WTC11 (cell line): ENCODE measurements at regions of chr12 and their contacts with region 1.

Region 1: GRCh38 chr12:1117970-1118563 is 127.0 kb downstream of the ERC1 start:
- DNase-seq: peak; percentile 66
- ATAC-seq: peak; percentile 32; the same call in 1 of the 2 replicates
- H3K4me3 Mint-ChIP-seq: no peak overlapping the region
- H3K27ac Mint-ChIP-seq: no peak overlapping the region
- H3K4me1 Mint-ChIP-seq: no peaks in the 10 kb centered on the region
- H3K27me3 Mint-ChIP-seq: peaks cover 40% of the 10 kb centered on the region
- CTCF ChIP-seq: peak; percentile 91

Region 2: GRCh38 chr12:1104088-1104800 is 13.8 kb before region 1 on chr12:
- CTCF ChIA-PET with region 1: interaction called, 18 read pairs
- POLR2A ChIA-PET with region 1: no interaction called
- DNase-seq: no peak
- ATAC-seq: no peak
- H3K4me3 Mint-ChIP-seq: no peak overlapping the region
- H3K27ac Mint-ChIP-seq: no peak overlapping the region
- H3K4me1 Mint-ChIP-seq: peaks cover 31% of the 10 kb centered on the region
- H3K27me3 Mint-ChIP-seq: no peaks in the 10 kb centered on the region
- CTCF ChIP-seq: no peak

Region 3: GRCh38 chr12:1220127-1221092 is 102.3 kb after region 1 on chr12:
- CTCF ChIA-PET with region 1: interaction called, 13 read pairs
- POLR2A ChIA-PET with region 1: no interaction called
- DNase-seq: no peak
- ATAC-seq: no peak
- H3K4me3 Mint-ChIP-seq: no peak overlapping the region
- H3K27ac Mint-ChIP-seq: no peak overlapping the region
- H3K4me1 Mint-ChIP-seq: no peaks in the 10 kb centered on the region
- H3K27me3 Mint-ChIP-seq: no peaks in the 10 kb centered on the region
- CTCF ChIP-seq: no peak

Region 4: DNA sequence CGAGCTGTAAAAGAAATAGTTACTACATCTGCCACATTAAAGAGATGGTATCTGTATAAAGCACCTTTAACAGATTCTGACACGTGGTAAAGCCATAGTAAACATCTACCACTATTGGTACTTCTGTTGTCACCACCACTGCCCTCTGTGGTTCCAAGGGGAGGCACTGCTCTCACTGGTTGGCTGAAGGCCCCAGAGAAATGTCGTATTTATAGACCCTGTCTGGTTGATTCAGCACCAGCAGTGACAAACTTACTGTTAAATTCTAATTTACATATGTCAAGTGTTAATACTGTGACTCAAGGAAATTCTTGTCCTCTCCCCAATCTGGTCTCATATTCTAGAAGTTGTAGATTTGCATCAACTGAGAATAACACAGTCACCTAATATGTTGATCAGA is 154.1 kb after region 1 on chr12:
- CTCF ChIA-PET with region 1: no interaction called
- POLR2A ChIA-PET with region 1: no interaction called
- DNase-seq: no peak
- ATAC-seq: no peak
- H3K4me3 Mint-ChIP-seq: no peak overlapping the region
- H3K27ac Mint-ChIP-seq: no peak overlapping the region
- H3K4me1 Mint-ChIP-seq: no peaks in the 10 kb centered on the region
- H3K27me3 Mint-ChIP-seq: no peaks in the 10 kb centered on the region
- CTCF ChIP-seq: no peak

Region 5: GRCh38 chr12:1297639-1298175 is 179.6 kb after region 1 on chr12:
- CTCF ChIA-PET with region 1: no interaction called
- POLR2A ChIA-PET with region 1: no interaction called
- DNase-seq: no peak
- ATAC-seq: no peak
- H3K4me3 Mint-ChIP-seq: no peak overlapping the region
- H3K27ac Mint-ChIP-seq: no peak overlapping the region
- H3K4me1 Mint-ChIP-seq: no peaks in the 10 kb centered on the region
- H3K27me3 Mint-ChIP-seq: no peaks in the 10 kb centered on the region
- CTCF ChIP-seq: no peak

Region 6: DNA sequence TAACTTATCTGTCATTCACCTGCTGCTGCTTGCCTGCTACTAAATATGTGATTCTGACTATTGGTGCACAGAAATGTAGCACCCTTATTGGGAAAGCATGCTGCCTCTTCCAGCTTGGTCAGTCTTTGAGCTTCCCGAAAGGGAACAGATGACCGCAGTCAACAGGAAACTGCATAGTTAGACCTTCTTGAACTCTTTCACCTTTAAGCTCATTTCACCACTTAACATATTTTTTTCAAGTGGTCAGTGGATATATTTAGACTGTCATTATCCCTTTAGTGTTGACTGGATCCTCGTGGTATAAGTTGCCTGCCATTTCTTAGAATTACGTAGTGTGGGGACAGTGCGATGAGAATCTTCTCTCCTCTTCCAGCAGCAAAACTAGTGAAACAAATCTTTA is 251.4 kb after region 1 on chr12:
- CTCF ChIA-PET with region 1: interaction called, 11 read pairs
- POLR2A ChIA-PET with region 1: no interaction called
- DNase-seq: no peak
- ATAC-seq: no peak
- H3K4me3 Mint-ChIP-seq: no peak overlapping the region; the same call in 1 of the 2 replicates
- H3K27ac Mint-ChIP-seq: peak overlapping the region; percentile 1; the same call in 1 of the 2 replicates
- H3K4me1 Mint-ChIP-seq: peaks cover 24% of the 10 kb centered on the region
- H3K27me3 Mint-ChIP-seq: no peaks in the 10 kb centered on the region
- CTCF ChIP-seq: no peak

Region 7: GRCh38 chr12:1517007-1517406 is 398.9 kb after region 1 on chr12:
- CTCF ChIA-PET with region 1: interaction called, 16 read pairs
- POLR2A ChIA-PET with region 1: no interaction called
- DNase-seq: peak; percentile 85
- ATAC-seq: peak; percentile 88
- H3K4me3 Mint-ChIP-seq: no peak overlapping the region
- H3K27ac Mint-ChIP-seq: no peak overlapping the region
- H3K4me1 Mint-ChIP-seq: peaks cover 12% of the 10 kb centered on the region
- H3K27me3 Mint-ChIP-seq: no peaks in the 10 kb centered on the region; the same call in 1 of the 2 replicates
- CTCF ChIP-seq: peak; percentile 88

Region 8: DNA sequence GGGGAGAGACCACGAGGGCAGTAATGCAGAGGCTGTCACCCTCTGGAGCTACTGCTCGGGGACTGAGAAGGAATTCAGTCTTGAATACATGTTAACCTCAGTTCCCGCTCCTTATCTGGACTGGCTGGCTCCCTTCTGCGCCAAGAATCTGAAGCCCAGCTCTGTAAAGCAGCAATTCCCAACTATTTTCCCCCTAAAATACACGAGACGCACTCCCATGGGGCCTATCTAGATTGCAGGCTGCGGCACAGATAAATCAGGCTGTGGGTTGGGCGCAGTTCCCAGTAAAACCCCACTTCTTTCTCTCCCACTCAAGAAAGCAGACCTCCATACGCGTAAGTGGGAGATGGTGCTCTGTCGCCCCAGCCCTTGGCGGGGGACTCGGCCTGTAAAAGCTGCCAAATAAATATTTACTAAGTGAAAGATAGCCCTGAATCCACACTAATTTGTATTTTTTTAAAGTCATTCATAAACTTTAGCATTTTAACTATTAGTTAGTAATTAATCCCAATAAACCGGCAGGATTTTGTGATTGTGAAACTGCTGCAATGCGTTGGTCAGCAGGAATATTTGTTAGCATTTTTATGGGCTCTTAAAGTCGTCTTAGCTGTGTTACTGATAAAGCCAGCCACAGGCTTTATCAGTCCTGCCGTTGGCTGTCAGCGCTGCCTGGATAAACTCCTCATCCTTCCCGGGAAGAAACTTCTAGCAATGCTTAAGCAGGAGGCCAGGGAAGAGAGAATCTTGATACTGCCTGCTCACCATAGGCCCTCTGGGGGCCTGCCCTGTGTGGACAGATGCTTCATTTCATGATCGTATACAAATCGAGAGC is 458.6 kb after region 1 on chr12:
- CTCF ChIA-PET with region 1: interaction called, 61 read pairs
- POLR2A ChIA-PET with region 1: no interaction called
- DNase-seq: no peak
- ATAC-seq: no peak
- H3K4me3 Mint-ChIP-seq: no peak overlapping the region
- H3K27ac Mint-ChIP-seq: no peak overlapping the region
- H3K4me1 Mint-ChIP-seq: 0 out of 2 replicates have a peak, but pooled peaks cover 6% of the 10 kb centered on the region
- H3K27me3 Mint-ChIP-seq: peaks cover 8% of the 10 kb centered on the region
- CTCF ChIP-seq: no peak

Region 9: GRCh38 chr12:1605129-1606020 is 487.3 kb after region 1 on chr12:
- CTCF ChIA-PET with region 1: interaction called, 13 read pairs
- POLR2A ChIA-PET with region 1: no interaction called
- DNase-seq: peak; percentile 48
- ATAC-seq: peak; percentile 77
- H3K4me3 Mint-ChIP-seq: peak overlapping the region; percentile 75
- H3K27ac Mint-ChIP-seq: no peak overlapping the region
- H3K4me1 Mint-ChIP-seq: peaks cover 14% of the 10 kb centered on the region
- H3K27me3 Mint-ChIP-seq: peaks cover 38% of the 10 kb centered on the region
- CTCF ChIP-seq: peak; percentile 41; the same call in 1 of the 2 replicates